Posterior vena cava (tissue), 2 donors: ENCODE measurements at regions of chr7 and their contacts with region 1.

Region 1: GRCh38 chr7:99155213-99155612 is 11.3 kb upstream of the SMURF1 start:
- DNase-seq: no peak

Region 2: GRCh38 chr7:99171731-99172130 is 16.5 kb after region 1 on chr7:
- intact Hi-C with region 1: loop called in 1 of 2 experiments (anchors 1 kb)
- DNase-seq: no peak

Region 3: DNA sequence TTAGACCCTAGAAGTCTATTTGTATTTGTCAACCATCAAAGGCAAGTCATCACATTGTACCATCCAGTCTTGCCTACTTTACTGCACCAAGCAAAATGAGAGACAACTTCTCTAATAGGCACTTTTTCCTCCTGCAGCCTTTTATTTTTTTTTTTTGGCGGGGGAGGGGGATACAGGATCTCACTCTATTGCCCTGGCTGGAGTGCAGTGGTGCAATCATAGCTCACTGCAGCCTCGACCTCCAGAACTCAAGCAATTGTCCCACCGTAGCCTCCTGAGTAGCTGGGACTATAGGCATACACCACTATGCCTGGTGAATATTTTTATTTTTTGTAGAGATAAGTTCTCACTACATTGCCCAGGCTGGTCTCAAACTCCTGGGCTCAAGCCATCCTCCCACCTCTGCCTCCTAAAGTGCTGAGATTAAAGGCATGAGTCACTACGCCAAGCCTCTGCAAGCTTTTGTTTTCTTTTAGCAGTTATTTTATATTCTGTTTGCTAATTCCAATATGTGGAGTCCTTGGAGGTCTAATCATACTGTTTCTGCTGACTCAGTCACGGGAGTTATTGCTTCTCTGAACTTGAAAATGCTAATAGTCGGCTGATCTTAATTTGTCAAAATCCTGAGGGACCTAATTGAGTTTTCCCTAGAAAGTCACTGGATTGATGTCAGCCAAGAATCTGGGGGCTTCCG is 38.5 kb after region 1 on chr7:
- intact Hi-C with region 1: no loop called
- DNase-seq: peak; percentile 13